Endothelial cell of umbilical vein (primary cell): ENCODE measurements at regions of chrX and their contacts with region 1.

Region 1: GRCh38 chrX:49043220-49043986 is at the start of gene TFE3:
- DNase-seq: peak; percentile 99
- H3K4me3 ChIP-seq: peak within 1 kb of the TSS; percentile 66 to 86 (median 70)
- H3K27ac ChIP-seq: peak within 1 kb of the TSS; percentile 86
- H3K4me1 ChIP-seq: peaks cover 33% of the 10 kb centered on the region
- H3K27me3 ChIP-seq: no peaks in the 10 kb centered on the region
- CTCF ChIP-seq: peak; percentile 59
- POLR2A ChIP-seq: peak; percentile 41
- total RNA-seq, gene TFE3: 35.5 and 37.1 TPM in 2 replicates

Region 2: GRCh38 chrX:48864210-48864609 is 179.2 kb before region 1 on chrX:
- CTCF ChIA-PET with region 1: no interaction called
- POLR2A ChIA-PET with region 1: no interaction called
- dilution Hi-C with region 1: no loop called
- intact Hi-C with region 1: no loop called
- DNase-seq: peak; percentile 3
- H3K4me3 ChIP-seq: no peak overlapping the region
- H3K27ac ChIP-seq: no peak overlapping the region
- H3K4me1 ChIP-seq: peaks cover 2% of the 10 kb centered on the region
- H3K27me3 ChIP-seq: no peaks in the 10 kb centered on the region
- CTCF ChIP-seq: no peak
- POLR2A ChIP-seq: no peak

Region 3: DNA sequence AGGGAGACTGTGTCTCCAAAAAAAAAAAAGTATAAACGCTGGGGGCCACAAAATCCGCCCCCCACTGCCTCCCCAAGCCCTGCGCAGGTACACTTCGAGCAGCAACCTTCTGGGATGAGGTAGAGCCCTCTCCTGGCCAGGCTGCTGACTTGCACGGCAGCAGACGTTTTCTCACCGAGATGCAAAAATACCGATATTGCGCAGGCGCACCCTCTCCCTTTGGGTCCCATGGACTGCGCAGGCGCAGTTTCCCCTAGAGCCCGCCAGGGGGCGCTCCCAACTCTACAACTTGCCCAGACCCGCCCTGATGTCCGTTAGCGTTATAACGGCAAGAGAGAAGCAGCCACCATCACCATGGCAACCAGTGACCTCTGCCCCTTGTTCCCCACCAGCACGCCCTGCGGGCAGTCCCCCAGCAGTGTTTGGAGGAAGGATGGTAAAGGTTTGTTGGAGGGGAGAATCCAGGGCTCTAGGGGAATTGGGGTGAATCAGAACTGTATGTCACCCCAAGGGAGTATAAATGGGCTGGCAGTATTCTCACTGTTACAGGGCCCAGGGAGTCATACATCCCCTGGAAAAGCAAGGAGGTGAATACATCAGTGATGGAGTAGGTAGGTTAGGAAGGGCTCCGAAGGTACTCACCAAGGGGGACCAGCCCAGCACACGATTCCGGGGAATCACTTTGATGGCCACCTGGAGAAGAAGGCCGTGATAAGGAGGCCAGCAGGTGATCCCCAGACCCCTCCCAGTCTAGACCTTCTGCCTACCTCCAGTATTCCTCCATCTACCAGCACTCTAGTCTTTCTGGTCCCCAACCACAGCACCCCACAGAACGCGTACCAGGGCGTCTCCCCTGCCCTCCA is 126.0 kb before region 1 on chrX:
- CTCF ChIA-PET with region 1: no interaction called
- POLR2A ChIA-PET with region 1: no interaction called
- dilution Hi-C with region 1: no loop called
- intact Hi-C with region 1: loop called (anchors 2 kb)
- DNase-seq: peak; percentile 93
- H3K4me3 ChIP-seq: no peak overlapping the region
- H3K27ac ChIP-seq: no peak overlapping the region
- H3K4me1 ChIP-seq: peaks cover 2% of the 10 kb centered on the region
- H3K27me3 ChIP-seq: no peaks in the 10 kb centered on the region
- CTCF ChIP-seq: peak; percentile 91 to 95
- POLR2A ChIP-seq: no peak

Region 4: DNA sequence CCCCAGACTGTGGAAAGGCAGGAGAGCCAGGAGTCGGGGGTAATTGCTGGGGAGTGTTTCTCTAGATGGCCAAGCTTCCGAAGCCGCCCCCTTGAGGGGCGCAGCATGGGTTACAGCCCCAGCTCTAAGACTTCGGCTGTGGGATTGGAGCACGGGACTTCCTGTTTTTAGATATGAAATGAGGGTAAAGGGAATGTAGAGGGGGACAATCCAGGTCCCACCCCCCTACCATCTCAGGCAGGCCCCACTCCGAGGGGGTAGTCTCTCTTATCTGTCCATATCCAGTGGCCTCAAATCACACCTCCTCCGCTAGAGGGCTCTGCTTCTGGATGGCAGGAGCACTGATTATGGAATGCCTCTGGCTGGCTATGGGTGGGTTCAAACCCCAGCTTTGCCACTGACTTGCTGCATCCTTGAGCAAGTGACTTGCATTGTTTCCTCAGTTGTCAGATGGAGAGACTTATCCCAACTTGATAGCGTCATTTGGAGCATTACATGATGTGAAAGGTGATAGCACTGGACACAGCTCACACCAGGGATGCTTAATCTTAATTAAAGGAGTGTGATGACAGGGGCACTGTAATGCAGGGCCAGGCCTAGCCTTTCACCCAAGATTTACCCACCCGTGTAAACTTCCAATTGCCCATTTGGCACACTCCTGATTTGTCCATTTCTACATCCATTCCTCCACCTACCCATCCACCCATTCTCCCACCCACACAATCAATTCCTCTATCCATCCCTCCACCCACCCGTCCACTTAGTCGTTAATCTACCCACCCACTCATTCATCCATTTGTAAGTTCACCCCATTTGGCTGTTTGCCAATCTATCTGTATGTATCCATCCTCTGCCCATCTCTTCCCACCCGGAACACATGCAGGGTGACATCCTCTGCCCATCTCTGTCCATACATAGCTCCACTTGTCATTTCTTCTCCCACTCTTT is 70.9 kb before region 1 on chrX:
- CTCF ChIA-PET with region 1: interaction called, 17 read pairs
- POLR2A ChIA-PET with region 1: no interaction called
- dilution Hi-C with region 1: no loop called
- intact Hi-C with region 1: loop called (anchors 1 kb)
- DNase-seq: peak; percentile 46
- H3K4me3 ChIP-seq: peak overlapping the region in 1 of 3 experiments; percentile 3
- H3K27ac ChIP-seq: no peak overlapping the region
- H3K4me1 ChIP-seq: peaks cover 3% of the 10 kb centered on the region
- H3K27me3 ChIP-seq: no peaks in the 10 kb centered on the region
- CTCF ChIP-seq: peak; percentile 46 to 56
- POLR2A ChIP-seq: no peak

Region 5: GRCh38 chrX:49073601-49074571 is 30.5 kb after region 1 on chrX and contains the start of gene PRAF2:
- CTCF ChIA-PET with region 1: interaction called, 3 read pairs
- POLR2A ChIA-PET with region 1: no interaction called
- dilution Hi-C with region 1: no loop called
- intact Hi-C with region 1: loop called (anchors 1 kb)
- DNase-seq: peak; percentile 91
- H3K4me3 ChIP-seq: peak within 1 kb of the TSS; percentile 37 to 85 (median 63)
- H3K27ac ChIP-seq: peak within 1 kb of the TSS; percentile 48
- H3K4me1 ChIP-seq: peaks cover 9% of the 10 kb centered on the region
- H3K27me3 ChIP-seq: no peaks in the 10 kb centered on the region
- CTCF ChIP-seq: no peak
- POLR2A ChIP-seq: peak; percentile 65
- total RNA-seq, gene PRAF2: 41.6 and 45.4 TPM in 2 replicates

Region 6: DNA sequence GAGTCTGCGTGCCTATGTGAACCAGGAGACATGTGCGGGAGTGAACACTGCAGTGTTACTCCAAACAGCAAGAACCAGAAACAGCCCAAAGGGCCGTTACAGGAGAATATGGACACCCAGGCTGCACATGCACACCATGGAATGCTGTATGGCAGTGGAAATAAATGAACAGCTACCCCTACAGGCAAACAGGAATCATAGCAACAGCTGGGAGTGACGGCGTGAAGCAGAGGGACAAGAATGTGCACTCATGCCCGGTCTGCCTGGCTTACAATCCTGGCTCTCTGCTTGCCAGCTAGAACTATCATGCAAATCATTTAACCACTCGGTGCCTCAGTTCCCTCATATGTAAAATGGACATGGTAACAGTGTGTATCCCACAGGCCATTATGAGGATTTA is 63.5 kb after region 1 on chrX:
- CTCF ChIA-PET with region 1: interaction called, 8 read pairs
- POLR2A ChIA-PET with region 1: no interaction called
- dilution Hi-C with region 1: no loop called
- intact Hi-C with region 1: loop called (anchors 1 kb)
- DNase-seq: peak; percentile 44
- H3K4me3 ChIP-seq: no peak overlapping the region
- H3K27ac ChIP-seq: no peak overlapping the region
- H3K4me1 ChIP-seq: no peaks in the 10 kb centered on the region
- H3K27me3 ChIP-seq: no peaks in the 10 kb centered on the region
- CTCF ChIP-seq: peak; percentile 42 to 51
- POLR2A ChIP-seq: no peak